Endothelial cell of umbilical vein (primary cell): ENCODE measurements at regions of chr6 and their contacts with region 1.

Region 1: DNA sequence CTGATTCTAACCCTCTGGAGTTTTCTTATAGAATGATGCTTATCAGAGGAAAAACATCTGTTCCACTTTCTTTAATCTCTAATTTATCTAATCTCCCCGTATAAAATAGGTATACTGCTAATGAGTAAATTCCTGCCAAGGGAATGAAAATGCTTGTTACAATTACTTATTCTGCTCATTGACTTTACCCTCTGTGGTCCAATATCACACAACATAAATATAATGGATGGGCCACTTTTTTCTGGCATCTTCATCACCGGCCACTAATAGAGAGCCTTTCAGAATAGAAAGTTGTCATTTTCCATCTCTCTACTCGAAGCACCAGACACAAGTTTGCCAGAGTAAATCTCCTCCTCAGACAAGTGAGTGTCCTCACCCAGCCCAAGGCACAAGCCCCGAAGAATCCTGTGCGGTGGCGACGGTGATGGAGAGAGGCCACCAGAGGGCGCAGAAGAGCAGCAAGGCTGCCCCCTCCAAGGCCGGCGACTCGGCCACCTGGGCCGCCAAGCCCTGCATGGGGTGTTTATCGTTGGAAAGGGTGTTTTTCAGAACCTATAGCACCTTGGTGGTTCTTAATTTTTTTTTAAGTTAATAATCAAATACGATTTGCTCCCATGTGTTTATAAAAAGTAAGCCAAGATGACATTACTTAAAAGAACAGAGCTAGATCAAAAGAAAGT is 212.9 kb upstream of the ARID1B start:
- DNase-seq: peak; percentile 67
- H3K4me3 ChIP-seq: no peak overlapping the region
- H3K27ac ChIP-seq: no peak overlapping the region
- H3K4me1 ChIP-seq: no peaks in the 10 kb centered on the region
- H3K27me3 ChIP-seq: peaks cover 0 to 4% of the 10 kb centered on the region in 2 experiments
- CTCF ChIP-seq: peak; percentile 88 to 94
- POLR2A ChIP-seq: no peak

Region 2: GRCh38 chr6:155327326-155328073 is 1236.8 kb before region 1 on chr6:
- CTCF ChIA-PET with region 1: interaction called, 7 read pairs
- POLR2A ChIA-PET with region 1: no interaction called
- dilution Hi-C with region 1: no loop called
- intact Hi-C with region 1: loop called (anchors 1 kb)
- DNase-seq: peak; percentile 84
- H3K4me3 ChIP-seq: no peak overlapping the region
- H3K27ac ChIP-seq: peak overlapping the region; percentile 7
- H3K4me1 ChIP-seq: peaks cover 9% of the 10 kb centered on the region
- H3K27me3 ChIP-seq: no peaks in the 10 kb centered on the region
- CTCF ChIP-seq: peak; percentile 50 to 58
- POLR2A ChIP-seq: no peak

Region 3: GRCh38 chr6:155832596-155832995 is 731.7 kb before region 1 on chr6:
- CTCF ChIA-PET with region 1: no interaction called
- POLR2A ChIA-PET with region 1: no interaction called
- dilution Hi-C with region 1: no loop called
- intact Hi-C with region 1: loop called (anchors 5 kb)
- DNase-seq: peak; percentile 87
- H3K4me3 ChIP-seq: no peak overlapping the region
- H3K27ac ChIP-seq: no peak overlapping the region
- H3K4me1 ChIP-seq: no peaks in the 10 kb centered on the region
- H3K27me3 ChIP-seq: no peaks in the 10 kb centered on the region
- CTCF ChIP-seq: peak in 1 of 2 donors; percentile 12
- POLR2A ChIP-seq: no peak

Region 4: DNA sequence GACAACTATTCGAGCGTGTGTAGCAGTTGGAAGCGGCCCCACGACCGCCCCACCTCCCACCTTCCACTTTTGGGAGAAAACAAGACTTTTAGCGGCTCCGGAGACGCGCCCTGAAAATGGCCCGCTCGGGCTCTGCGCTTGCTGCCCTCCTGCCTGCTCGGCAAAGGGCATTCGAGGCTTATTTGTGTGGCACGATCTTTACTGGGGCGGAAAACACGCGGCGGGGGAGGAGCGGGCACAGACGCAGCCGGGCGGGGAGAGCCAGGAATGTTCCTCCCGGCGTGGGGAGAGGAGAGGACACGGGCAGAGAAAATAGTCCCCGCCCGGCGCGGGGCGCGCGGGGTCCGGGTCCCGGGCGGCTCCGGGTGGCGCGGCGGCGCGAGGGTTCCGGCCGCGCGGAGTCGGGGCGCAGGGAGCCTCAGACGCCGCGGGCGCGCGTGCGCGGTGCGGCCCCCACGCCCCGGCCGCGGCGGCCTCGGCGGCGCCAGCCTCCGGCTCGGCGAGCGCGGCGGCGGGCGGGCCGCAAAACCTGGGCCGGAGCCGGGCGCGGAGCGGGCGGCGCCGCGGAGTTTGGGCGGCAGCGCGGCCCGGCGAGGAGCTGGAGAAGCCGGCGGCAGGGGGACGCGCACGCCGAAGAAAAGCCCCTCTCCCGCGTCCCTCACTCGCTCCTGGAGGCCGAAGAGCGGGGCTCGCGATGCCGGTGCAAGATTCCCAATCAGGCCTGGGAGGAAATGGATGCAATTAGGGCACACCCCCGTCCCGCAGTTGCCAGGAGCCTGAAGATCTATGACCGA is 122.9 kb after region 1 on chr6:
- CTCF ChIA-PET with region 1: interaction called, 4 read pairs
- POLR2A ChIA-PET with region 1: no interaction called
- dilution Hi-C with region 1: no loop called
- intact Hi-C with region 1: loop called (anchors 1 kb)
- DNase-seq: peak; percentile 85
- H3K4me3 ChIP-seq: peak overlapping the region; percentile 82 to 91 (median 86)
- H3K27ac ChIP-seq: peak overlapping the region; percentile 98
- H3K4me1 ChIP-seq: peaks cover 11% of the 10 kb centered on the region
- H3K27me3 ChIP-seq: peaks cover 5 to 18% of the 10 kb centered on the region in 2 experiments
- CTCF ChIP-seq: no peak
- POLR2A ChIP-seq: peak; percentile 68

Region 5: DNA sequence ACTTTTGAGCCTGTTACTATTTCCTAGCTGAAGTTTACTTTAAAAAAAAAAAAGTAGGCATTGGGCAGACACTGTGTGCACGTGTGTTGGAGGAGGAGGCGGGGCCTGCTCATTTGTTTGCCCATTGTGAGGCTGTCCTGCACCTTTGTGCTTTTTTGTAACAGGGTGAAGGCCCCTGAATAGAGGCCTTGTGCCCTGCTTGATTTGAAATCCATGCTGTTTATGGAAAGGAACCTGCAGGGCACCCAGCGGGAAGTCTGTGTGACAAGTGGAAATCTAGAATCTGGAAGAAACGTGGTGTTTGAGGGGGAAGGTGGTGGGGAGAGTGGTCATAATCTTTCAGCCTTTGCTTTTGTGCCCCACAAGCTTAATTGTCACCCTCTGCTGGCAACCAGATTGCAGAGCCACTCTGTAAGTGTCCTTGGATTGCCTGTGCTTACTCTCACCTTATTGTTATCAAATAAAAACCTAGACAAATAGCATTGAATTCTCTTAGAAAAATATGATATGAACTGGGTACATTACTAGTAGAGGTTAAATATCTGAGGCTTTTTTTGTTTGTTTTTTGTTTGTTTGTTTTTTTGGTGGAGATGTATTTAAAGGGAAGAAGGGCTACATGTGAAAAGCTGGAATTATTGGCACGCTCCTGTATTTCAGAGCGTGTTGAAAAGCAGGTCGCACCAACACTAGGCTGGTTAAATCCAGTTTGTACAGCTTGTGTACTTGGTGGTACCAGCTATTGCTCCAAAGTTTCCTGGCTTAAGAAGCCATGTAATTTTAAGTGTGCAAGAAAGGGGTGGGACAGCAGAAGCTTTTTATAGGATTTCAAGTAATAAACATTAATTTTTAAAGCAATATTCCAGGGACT is 369.2 kb after region 1 on chr6:
- CTCF ChIA-PET with region 1: no interaction called
- POLR2A ChIA-PET with region 1: no interaction called
- dilution Hi-C with region 1: no loop called
- intact Hi-C with region 1: loop called (anchors 5 kb)
- DNase-seq: no peak
- H3K4me3 ChIP-seq: no peak overlapping the region
- H3K27ac ChIP-seq: no peak overlapping the region
- H3K4me1 ChIP-seq: no peaks in the 10 kb centered on the region
- H3K27me3 ChIP-seq: no peaks in the 10 kb centered on the region
- CTCF ChIP-seq: no peak
- POLR2A ChIP-seq: no peak

Region 6: GRCh38 chr6:157021344-157021992 is 457.2 kb after region 1 on chr6:
- CTCF ChIA-PET with region 1: interaction called, 3 read pairs
- POLR2A ChIA-PET with region 1: no interaction called
- dilution Hi-C with region 1: no loop called
- intact Hi-C with region 1: loop called (anchors 1 kb)
- DNase-seq: peak; percentile 85
- H3K4me3 ChIP-seq: peak overlapping the region; percentile 39 to 94 (median 92)
- H3K27ac ChIP-seq: peak overlapping the region; percentile 92
- H3K4me1 ChIP-seq: peaks cover 18% of the 10 kb centered on the region
- H3K27me3 ChIP-seq: no peaks in the 10 kb centered on the region
- CTCF ChIP-seq: peak; percentile 24 to 46
- POLR2A ChIP-seq: peak; percentile 94

Region 7: GRCh38 chr6:157184202-157185020 is 620.1 kb after region 1 on chr6:
- CTCF ChIA-PET with region 1: interaction called, 4 read pairs
- POLR2A ChIA-PET with region 1: no interaction called
- dilution Hi-C with region 1: no loop called
- intact Hi-C with region 1: loop called (anchors 1 kb)
- DNase-seq: peak; percentile 44
- H3K4me3 ChIP-seq: no peak overlapping the region
- H3K27ac ChIP-seq: no peak overlapping the region
- H3K4me1 ChIP-seq: no peaks in the 10 kb centered on the region
- H3K27me3 ChIP-seq: no peaks in the 10 kb centered on the region
- CTCF ChIP-seq: peak; percentile 82 to 89
- POLR2A ChIP-seq: no peak